Activated CD4-positive, alpha-beta memory T cell treated with anti-CD3 and anti-CD28 coated beads for 36 hours (primary cell): ENCODE measurements at regions of chr1 and their contacts with region 1.

Region 1: GRCh38 chr1:205121660-205122488 is at the start of gene RBBP5:
- DNase-seq: peak; percentile 97
- H3K4me3 Mint-ChIP-seq: peak within 1 kb of the TSS; percentile 98
- H3K27ac Mint-ChIP-seq: peak within 1 kb of the TSS; percentile 98
- H3K4me1 Mint-ChIP-seq: peaks cover 34% of the 10 kb centered on the region
- H3K27me3 Mint-ChIP-seq: no peaks in the 10 kb centered on the region
- total RNA-seq, gene RBBP5: 23.5 to 25.9 TPM

Region 2: GRCh38 chr1:205141236-205142101 is 19.6 kb after region 1 on chr1:
- CTCF ChIA-PET with region 1: interaction called, 21 read pairs
- POLR2A ChIA-PET with region 1: interaction called, 3 read pairs
- intact Hi-C with region 1: loop called (anchors 2 kb)
- DNase-seq: peak; percentile 83
- H3K4me3 Mint-ChIP-seq: no peak overlapping the region
- H3K27ac Mint-ChIP-seq: no peak overlapping the region
- H3K4me1 Mint-ChIP-seq: peaks cover 4% of the 10 kb centered on the region
- H3K27me3 Mint-ChIP-seq: no peaks in the 10 kb centered on the region

Region 3: DNA sequence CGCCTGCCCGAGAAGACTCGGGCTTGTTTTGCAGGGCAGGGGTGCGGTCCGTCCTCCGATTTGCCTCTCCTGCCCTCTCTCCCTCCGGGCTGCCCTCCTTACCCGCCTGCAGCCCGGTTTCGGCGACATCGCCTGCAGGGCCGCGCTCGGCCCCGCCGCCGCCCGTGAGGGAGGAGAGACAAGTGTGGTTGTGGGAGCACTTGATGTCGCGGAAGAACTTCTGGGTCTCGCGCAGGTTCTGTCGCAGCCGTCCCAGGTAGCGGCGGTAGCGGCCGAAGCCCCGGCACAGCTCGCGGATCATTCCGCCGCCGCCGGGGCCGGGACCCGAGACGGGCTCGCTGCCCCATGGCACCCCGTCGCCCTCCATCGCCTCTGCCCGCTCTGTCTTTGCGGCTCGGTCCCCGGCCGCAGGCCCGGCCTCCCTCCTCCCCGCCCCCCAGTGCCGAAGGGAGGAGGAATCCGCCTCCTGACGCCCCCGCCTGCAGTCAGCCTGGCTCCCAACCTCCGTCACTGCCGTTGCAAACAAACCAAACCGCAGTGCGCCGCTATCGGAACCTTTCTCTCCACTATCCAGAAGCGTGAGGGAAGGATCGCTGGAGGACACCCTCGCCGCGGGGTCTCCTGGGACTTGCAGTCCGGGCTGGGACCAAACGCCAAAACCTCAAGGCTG is 89.4 kb after region 1 on chr1 and contains the start of gene DSTYK:
- CTCF ChIA-PET with region 1: no interaction called
- POLR2A ChIA-PET with region 1: interaction called, 4 read pairs
- intact Hi-C with region 1: loop called (anchors 1 kb)
- DNase-seq: peak; percentile 96
- H3K4me3 Mint-ChIP-seq: peak within 1 kb of the TSS; percentile 92
- H3K27ac Mint-ChIP-seq: peak within 1 kb of the TSS; percentile 91
- H3K4me1 Mint-ChIP-seq: peaks cover 48% of the 10 kb centered on the region
- H3K27me3 Mint-ChIP-seq: no peaks in the 10 kb centered on the region
- total RNA-seq, gene DSTYK: 9.0 to 9.8 TPM

Region 4: DNA sequence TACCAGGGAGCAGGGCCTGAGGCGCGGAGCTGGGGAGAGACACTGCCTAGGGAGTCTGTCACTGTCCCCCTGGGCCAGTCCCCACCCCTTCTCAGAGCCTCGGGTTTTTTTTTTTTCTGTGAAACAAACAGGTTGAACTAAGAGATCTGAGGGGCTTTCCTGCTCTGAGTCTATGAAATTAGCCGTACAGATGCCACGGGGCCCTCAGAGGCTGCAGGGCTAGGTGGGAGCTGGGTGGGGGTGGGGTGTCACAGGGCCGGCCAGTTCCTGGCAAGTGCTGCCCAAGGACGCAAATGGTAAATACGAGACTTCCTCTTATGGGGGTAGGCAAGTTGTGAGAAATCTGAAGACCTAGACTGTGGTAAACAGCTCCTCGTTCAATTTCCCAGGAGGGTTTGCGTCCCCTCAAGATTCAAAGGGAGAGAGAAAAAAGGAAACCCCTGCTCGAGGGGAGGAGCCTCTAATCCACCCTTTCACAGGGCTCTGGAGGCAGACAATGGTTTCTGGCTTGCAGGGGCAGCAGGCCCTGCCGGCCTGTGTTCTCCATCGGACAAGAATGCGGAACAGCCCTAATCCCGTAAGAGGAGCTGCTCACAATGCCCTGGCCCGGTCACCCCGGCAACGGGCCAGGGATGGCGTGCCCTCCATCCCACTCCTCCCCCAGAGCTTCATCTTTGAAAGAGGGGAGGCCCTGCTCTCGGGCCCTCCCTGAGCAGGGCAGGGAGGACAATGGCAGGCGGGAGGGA is 191.9 kb after region 1 on chr1:
- CTCF ChIA-PET with region 1: no interaction called
- POLR2A ChIA-PET with region 1: no interaction called
- intact Hi-C with region 1: loop called (anchors 10 kb)
- DNase-seq: peak; percentile 70
- H3K4me3 Mint-ChIP-seq: peak overlapping the region; percentile 81
- H3K27ac Mint-ChIP-seq: peak overlapping the region; percentile 95
- H3K4me1 Mint-ChIP-seq: peaks cover 86% of the 10 kb centered on the region
- H3K27me3 Mint-ChIP-seq: no peaks in the 10 kb centered on the region

Region 5: DNA sequence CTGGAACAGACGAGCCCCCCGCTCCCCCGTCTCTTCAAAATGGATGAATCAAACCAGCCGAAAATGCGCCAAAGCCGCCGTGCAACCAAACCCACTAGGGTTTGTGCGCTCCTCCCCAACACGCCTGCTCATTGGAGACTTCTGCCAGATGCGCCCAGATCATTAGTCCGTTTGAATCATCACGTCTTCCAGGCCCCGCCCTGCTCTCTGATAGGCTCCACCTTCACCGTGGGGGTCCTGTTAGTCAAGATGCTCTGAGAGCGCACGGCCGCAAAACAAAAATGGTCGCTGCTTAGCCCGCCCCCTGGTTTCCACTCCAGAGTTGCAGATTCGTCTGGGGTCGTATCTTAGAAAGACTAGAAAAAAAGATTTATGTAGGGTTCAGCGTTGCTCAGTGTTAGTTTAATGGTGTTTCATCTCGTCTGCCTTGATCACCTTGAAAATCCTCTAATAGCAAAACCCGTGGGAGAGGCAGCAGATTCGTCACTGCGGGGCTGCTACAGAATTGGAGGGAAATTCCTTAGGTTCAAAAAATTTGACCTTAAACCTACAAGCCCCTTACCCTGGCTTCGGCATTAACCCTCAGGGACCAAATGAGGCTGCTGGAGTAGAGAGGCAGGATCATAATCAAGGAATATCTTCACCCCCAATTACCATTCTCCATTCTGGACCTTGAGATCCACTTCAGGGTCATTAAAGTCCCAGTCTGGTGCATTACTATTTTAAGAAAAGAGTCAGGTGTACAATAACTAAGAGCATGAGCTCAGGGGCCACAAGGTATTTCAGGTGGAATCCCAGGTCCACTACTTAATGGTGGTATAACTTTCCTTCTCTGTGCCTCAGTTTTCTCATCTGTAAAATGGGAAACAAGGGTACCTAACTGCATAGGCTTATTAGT is 628.5 kb after region 1 on chr1 and contains the start of gene NUCKS1:
- CTCF ChIA-PET with region 1: no interaction called
- POLR2A ChIA-PET with region 1: no interaction called
- intact Hi-C with region 1: loop called (anchors 1 kb)
- DNase-seq: peak; percentile 98
- H3K4me3 Mint-ChIP-seq: peak within 1 kb of the TSS; percentile 93
- H3K27ac Mint-ChIP-seq: peak within 1 kb of the TSS; percentile 99
- H3K4me1 Mint-ChIP-seq: peaks cover 30% of the 10 kb centered on the region
- H3K27me3 Mint-ChIP-seq: peaks cover 1% of the 10 kb centered on the region
- total RNA-seq, gene NUCKS1: 149 to 202 TPM